ENCODE measurements at regions of chr22 and their contacts with region 1.

Region 1: DNA sequence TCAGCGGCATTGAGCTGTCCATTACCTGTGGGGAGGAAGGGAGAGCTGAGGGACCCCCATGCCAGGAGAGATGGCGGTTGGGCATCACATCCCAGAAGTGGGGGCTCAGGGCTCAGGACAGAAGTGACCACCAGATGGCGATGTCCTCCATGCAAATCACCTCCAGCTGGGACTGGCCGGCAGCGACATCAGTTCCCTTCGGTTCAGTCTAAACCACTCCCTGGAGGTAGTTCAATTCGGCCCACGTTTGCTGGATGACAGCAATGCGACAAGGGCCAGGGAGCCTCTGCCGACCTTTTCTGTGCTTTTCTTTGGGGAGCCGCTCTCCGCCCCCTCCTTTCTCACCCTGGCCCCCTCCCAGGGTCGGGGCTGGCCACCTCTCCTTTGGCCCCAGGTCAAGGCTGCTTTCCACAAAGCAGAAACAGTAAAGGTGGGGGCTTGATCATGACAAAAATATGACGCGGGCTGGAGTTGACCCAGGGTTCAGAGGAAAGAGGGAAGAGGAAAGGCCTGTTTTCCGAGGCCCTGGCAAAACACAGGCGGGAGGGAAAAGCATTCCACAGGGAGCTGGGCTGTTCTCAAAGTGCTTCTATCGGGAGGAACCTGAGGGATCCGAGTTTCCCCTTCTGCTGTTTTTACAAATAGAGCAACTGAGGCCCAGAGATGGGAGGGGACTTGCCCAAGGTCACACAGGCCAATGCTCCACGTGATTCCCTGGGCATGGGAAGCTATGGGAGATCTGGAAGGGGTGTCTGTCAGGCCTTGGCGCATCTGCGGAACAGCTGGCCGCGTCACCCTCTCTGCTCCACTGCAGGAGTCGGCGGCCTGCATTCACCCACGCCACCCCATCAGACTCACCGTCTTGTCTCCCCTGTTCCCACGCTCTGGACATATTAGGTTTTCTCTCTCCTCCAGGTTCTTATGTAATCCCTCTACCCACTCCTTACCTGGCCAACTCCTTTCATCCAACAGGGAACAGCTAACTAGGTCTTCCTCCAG is 54.7 kb downstream of the FBXO7 start:
- DNase-seq: peak; percentile 82 to 88
- ATAC-seq: peak; percentile 76

Region 2: DNA sequence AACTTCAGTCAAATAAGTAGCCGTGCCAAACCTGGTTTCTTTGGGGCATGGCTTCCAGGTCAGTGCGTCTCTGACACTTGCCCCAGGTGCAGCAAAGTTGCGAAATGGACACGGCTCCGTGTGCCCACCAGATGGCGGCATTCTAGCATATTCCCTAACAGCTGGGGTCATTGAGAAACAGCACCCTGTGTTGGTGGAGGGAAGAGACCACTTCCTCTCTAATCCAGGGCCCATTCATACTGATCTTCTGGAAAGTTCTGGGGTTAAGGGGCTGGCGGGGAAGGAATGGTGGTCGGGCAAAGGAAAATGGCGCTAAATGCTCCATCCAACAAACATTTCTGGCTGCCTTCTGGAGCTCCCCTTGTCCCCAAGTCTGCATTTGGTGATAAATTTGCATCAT is 131.0 kb after region 1 on chr22:
- intact Hi-C with region 1: no loop called
- DNase-seq: peak; percentile 46 to 73
- ATAC-seq: peak; percentile 87

Region 3: GRCh38 chr22:32733923-32734514 is 204.7 kb after region 1 on chr22:
- intact Hi-C with region 1: no loop called
- DNase-seq: no peak
- ATAC-seq: no peak

Region 4: GRCh38 chr22:32823024-32823730 is 293.9 kb after region 1 on chr22:
- intact Hi-C with region 1: no loop called
- DNase-seq: peak in 1 of 2 donors; percentile 67
- ATAC-seq: peak; percentile 80

Region 5: GRCh38 chr22:32985899-32986765 is 456.8 kb after region 1 on chr22:
- intact Hi-C with region 1: loop called in 1 of 2 experiments (anchors 5 kb)
- DNase-seq: peak; percentile 51 to 53
- ATAC-seq: peak; percentile 95

Region 6: DNA sequence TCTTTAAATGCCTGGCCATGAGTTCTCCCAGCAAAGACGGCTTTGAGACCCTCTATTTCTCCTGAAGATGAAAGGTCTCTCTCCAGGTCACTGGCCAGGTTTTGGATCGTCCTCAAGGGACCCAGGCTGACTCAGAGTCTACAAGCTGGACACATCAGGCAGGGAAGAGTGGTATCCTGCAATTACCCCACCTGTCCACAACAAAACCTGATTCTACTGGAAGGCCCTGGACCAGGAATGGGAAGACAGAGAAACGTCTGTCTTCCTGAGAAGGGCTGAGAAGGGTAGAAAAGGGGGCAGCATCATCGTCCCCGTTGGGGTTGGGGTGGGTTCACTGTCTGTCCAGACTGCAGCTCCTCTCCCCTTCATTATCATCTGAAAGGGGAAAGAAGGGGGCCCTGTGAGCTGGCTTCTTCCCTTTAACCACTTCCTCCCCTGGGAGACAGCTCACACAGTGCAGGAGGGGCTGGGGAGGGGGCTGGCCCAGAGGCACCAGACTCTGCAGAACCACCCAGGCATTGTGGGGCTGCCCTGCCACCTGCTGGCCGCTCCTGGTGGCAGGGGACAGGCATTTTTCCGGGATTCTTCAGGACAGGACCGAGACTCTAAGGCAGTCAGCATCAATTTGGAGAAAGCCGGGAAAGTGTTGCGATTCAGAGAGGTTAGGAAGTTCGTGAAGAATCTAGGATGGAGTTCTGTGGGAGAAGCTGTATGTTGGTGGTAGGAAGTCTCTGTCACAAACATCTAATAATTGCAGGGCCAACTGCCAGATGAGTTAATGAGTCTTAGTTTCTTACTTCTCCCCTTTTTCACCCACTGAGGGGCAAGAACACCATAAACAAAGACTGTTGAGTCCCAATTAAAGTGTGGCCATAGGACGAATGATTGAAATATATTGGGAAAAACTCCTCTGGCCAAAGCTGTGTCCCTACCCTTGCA is 471.3 kb after region 1 on chr22:
- intact Hi-C with region 1: loop called in 1 of 2 experiments (anchors 5 kb)
- DNase-seq: peak in 1 of 2 donors; percentile 37
- ATAC-seq: peak; percentile 56

Measured in left colon (tissue), 2 donors.